Psoas muscle (tissue), 8 donors: ENCODE measurements at regions of chr15 and their contacts with region 1.

Region 1: DNA sequence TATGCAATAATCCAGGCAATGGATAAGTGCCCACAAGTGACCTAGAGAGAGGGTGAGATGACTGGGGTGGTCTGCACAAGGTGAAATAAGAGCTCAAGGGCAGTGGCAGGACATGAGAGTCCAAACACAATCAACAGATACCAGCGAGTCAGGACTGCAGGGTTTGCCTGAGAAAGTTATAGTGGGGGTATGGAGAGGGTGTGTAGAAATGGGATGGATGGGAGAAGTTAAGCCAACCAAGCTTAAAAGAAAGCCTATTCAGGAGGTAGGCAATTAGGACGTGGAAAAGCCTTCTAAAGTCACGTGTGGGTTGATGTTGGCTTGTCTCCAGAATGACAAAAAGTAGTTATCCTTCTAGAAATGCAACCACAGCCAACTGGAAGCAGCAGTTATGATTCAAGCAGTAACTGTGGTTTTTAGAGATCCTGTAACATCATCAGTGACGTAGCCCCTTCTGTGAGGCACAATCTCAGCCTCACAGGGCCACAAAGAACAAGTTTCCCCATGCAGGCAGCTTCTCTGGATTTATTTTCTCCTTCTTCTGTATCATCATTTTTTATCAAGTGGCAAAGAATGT is 56.1 kb downstream of the FAM174B start:
- DNase-seq: no peak
- ATAC-seq: no peak
- H3K4me3 ChIP-seq: no peak overlapping the region
- H3K27ac ChIP-seq: no peak overlapping the region
- H3K4me1 ChIP-seq: no peaks in the 10 kb centered on the region
- H3K27me3 ChIP-seq: no peaks in the 10 kb centered on the region
- CTCF ChIP-seq: no peak

Region 2: DNA sequence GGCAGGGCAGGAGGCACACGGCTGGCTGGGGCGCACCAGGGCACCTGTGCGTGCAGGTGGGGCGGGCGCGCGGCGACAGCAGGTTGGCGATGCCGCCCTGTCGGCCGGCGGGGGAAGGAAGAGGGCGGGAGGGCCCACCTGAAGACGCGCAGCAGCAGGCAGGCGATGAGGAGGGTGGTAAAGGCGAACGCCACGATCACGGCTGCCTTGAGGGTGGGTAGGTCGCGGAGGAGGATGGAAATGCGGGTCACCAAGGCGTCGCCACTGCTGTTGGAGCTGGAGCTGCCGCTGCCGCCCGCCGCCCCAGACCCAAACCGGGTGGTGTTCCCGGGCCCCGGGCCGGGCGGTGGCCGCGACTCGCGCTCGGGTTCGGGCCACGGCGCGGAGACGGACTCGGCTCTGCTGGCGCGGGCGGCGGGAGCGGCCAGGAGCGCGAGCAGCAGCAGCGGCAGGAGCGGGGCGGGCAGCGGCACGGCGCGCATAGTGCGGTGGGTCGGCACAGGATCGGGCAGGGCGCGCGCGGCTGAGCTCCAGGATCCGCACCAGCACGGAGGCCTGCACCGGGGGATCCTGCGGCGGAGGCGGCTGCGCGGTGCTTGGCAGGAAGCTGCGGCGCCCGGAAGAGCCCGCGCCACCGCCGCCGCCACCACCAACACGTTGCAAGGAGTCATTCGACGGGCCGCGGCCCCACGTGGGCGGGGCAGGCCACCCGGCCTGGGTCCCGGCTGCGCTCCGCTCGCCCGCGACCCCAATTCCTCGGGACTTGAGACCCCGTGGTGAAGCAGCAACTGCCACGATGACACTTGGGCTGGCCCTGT is 55.9 kb after region 1 on chr15 and contains the start of gene FAM174B:
- intact Hi-C with region 1: loop called in 1 of 2 experiments (anchors 10 kb)
- DNase-seq: peak; percentile 57 to 71
- ATAC-seq: peak; percentile 87 to 95 (median 88)
- H3K4me3 ChIP-seq: peak within 1 kb of the TSS; percentile 73
- H3K27ac ChIP-seq: peak within 1 kb of the TSS; percentile 60
- H3K4me1 ChIP-seq: no peaks in the 10 kb centered on the region
- H3K27me3 ChIP-seq: peaks cover 0 to 6% (median 0%) of the 10 kb centered on the region in 3 donors
- CTCF ChIP-seq: no peak
- total RNA-seq, gene FAM174B: 9.5 to 22.1 (median 12.2) TPM

Region 3: DNA sequence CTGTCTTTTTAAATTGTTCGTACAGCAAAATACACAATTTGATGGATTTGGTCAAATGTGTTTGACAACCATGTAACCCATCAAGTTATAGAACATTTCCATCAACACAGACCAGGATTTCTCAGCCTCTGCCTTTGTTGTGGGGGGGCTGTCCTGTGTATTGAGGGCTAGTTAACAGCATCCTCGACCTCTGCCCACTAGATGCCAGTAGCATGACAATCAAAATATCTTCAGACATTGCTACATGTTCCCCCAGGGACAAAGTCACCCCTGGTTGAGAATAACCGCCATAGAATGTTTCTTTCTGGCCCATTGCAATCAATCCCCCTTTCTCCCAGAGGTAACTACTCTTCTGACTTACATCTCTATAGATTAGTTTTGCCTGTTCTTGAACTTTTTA is 799.6 kb after region 1 on chr15:
- intact Hi-C with region 1: loop called in 1 of 2 experiments (anchors 10 kb)
- DNase-seq: no peak
- ATAC-seq: peak in 3 of 4 donors; percentile 63 to 85 (median 83)
- H3K4me3 ChIP-seq: no peak overlapping the region
- H3K27ac ChIP-seq: no peak overlapping the region
- H3K4me1 ChIP-seq: no peaks in the 10 kb centered on the region
- H3K27me3 ChIP-seq: no peaks in the 10 kb centered on the region
- CTCF ChIP-seq: peak; percentile 14